H1 (cell line): ENCODE measurements at regions of chr1 and their contacts with region 1.

Region 1: DNA sequence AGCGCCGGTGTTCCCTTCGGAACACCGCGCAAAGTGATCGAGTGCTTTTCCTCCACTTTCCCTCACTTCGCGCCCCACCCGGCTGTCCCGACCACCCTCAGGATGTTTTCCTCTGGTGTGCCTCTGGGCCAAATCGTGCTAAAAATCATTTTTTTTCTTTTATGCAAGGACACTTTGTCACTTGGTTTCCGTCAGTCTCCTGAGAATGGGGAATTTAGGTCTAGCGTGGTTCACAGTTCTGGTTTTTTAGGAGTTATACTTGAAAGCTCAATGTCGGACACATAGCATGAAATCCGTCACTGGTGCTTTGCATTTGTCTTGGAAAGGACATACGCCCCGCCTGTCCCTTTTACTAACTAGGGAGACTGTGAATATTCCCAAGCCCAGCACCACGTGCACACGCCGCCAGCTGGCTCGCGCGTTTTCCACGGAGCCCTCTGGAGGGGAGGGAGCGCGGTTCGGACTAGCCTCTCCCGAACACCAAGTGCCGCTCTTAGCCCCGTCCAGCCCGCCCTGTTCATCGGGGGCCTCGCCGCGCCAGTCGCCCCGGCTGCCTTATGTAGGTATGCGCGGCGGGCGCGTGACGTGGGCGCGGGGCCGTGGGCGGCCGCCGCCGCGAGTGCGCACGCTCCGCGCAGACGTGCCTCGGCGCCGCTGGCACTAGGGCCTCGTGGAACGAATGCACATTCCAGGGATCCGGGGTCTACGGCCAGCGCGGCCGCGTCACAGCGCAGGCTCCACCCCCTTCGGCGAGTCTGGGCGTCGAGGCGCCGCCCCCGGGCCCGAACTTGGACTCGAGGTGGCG is 572 bp upstream of the IRF2BP2 start:
- DNase-seq: peak; percentile 43 to 93
- H3K4me3 ChIP-seq: peak overlapping the region; percentile 73 to 98 (median 82)
- H3K27ac ChIP-seq: peak overlapping the region; percentile 89
- H3K4me1 ChIP-seq: peaks cover 14 to 33% (median 23%) of the 10 kb centered on the region in 4 experiments
- H3K27me3 ChIP-seq: no peaks in the 10 kb centered on the region
- CTCF ChIP-seq: no peak
- EP300 ChIP-seq: no peak; a peak in 1 of 3 replicates
- POLR2A ChIP-seq: peak; percentile 68 to 84
- RAD21 ChIP-seq: no peak

Region 2: DNA sequence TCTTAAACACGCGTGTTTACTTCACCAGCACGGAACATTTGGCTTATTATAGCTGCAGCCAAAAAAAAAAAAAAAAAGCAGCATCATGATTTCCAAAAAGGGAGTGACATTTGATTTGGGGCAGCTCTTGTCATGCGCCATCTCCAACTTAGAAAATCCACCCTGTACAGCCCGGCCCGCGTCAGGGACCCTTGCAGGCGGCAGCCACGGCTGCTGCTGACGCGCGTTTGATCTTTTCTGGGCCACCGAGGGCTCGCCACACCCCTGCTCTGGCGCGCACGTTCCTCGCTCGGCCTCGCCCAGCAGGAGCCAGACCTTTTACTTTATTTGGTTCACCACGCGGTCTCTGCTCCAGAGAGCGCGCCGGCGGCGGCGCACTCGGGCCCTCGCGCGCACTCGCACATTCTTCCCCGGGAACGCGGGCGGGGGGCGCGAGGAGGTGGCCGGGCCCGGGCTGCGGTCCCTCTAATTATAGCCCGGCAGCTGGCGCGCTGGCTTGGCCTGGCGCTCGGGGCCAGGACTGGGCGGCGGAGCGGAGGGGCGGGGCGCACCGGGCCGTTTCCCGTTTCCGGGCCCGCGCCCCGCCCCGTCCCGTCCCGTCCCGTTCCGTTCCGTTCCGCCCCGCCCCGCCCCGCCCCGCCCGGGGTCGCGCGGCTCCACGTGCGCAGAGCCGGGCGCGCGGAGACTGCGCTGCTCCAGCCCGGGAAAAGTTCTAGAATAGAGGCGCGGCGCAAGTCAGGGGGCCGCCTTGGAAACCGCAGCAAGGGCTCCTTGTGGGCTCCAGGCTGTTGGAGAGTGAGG is 10.7 kb before region 1 on chr1:
- CTCF ChIA-PET with region 1: interaction called, 4 read pairs
- POLR2A ChIA-PET with region 1: interaction called, 35 read pairs
- DNase-seq: peak; percentile 39 to 78
- H3K4me3 ChIP-seq: peak overlapping the region; percentile 31 to 67 (median 57)
- H3K27ac ChIP-seq: peak overlapping the region; percentile 20; the same call in 1 of the 2 replicates
- H3K4me1 ChIP-seq: peaks cover 5 to 13% (median 9%) of the 10 kb centered on the region in 4 experiments; a peak in 6 of 7 replicates
- H3K27me3 ChIP-seq: no peaks in the 10 kb centered on the region
- CTCF ChIP-seq: no peak
- EP300 ChIP-seq: no peak
- POLR2A ChIP-seq: peak in 1 of 2 experiments; percentile 54; a peak in 2 of 3 replicates
- RAD21 ChIP-seq: peak; percentile 11 to 16; a peak in 2 of 4 replicates

Region 3: GRCh38 chr1:234722904-234723720 is 112.6 kb after region 1 on chr1:
- CTCF ChIA-PET with region 1: interaction called, 5 read pairs
- POLR2A ChIA-PET with region 1: interaction called, 12 read pairs
- DNase-seq: no peak
- H3K4me3 ChIP-seq: no peak overlapping the region
- H3K27ac ChIP-seq: 0 out of 2 replicates have a peak overlapping the region, but pooled peaks have one; percentile 28
- H3K4me1 ChIP-seq: peaks cover 13 to 33% (median 21%) of the 10 kb centered on the region in 4 experiments
- H3K27me3 ChIP-seq: no peaks in the 10 kb centered on the region; a peak in 2 of 7 replicates
- CTCF ChIP-seq: no peak
- EP300 ChIP-seq: no peak
- POLR2A ChIP-seq: no peak
- RAD21 ChIP-seq: no peak

Region 4: DNA sequence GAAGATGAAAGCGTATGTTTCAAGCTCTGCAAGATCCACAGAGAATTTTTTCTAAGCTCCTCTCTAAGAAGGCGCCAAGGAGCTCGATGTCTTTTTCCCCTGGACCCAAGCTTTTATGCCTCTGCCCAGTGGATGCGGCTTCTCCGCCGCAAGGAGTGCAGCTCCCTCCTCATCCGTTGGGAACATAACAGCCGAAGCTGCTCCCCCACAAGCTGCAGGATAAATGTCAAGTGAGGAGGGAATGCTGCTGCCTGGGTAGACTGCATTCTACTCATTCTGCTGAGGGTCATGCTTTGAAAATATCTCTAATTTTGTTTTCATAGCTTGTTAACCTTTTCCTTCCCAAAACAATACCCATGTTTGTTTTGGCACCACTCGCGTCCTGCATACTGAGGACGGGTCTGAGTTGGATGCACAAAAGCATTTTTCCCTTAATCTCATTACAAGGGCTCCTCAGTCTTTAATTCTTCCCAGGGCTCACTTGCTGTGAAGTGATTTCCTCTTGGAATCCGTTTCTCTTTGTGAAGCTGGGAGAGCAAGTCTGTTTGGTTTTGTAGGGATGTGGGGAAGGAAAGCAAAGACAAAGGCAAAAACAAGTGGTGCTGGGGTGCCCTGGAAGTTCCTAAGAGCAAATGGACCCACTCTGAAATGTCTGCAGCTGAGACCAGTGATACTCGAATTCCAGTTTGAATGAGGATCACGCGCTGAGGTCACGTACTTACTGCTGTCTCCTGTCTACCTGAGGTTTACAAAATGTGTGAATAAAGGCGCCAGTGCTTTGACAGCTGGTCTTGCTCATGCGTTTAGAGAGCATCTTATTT is 133.5 kb after region 1 on chr1:
- CTCF ChIA-PET with region 1: interaction called, 3 read pairs
- POLR2A ChIA-PET with region 1: interaction called, 12 read pairs
- DNase-seq: no peak
- H3K4me3 ChIP-seq: peak overlapping the region; percentile 11 to 49 (median 34); a peak in 5 of 8 replicates
- H3K27ac ChIP-seq: no peak overlapping the region
- H3K4me1 ChIP-seq: peaks cover 4 to 18% (median 11%) of the 10 kb centered on the region in 4 experiments
- H3K27me3 ChIP-seq: no peaks in the 10 kb centered on the region; a peak in 1 of 7 replicates
- CTCF ChIP-seq: no peak
- EP300 ChIP-seq: no peak
- POLR2A ChIP-seq: no peak
- RAD21 ChIP-seq: peak; percentile 1 to 14; a peak in 3 of 4 replicates